ENCODE measurements at regions of chr2 and their contacts with region 1.

Region 1: GRCh38 chr2:146982393-146982846 is 862.4 kb upstream of the ACVR2A start:
- DNase-seq: peak; percentile 83
- H3K4me3 ChIP-seq: no peak overlapping the region
- CTCF ChIP-seq: no peak

Region 2: GRCh38 chr2:146820672-146821071 is 161.7 kb before region 1 on chr2:
- in situ Hi-C with region 1: no loop called
- DNase-seq: peak; percentile 76
- H3K4me3 ChIP-seq: no peak overlapping the region
- CTCF ChIP-seq: no peak

Region 3: GRCh38 chr2:147030966-147031720 is 48.7 kb after region 1 on chr2:
- in situ Hi-C with region 1: loop called (anchors 10 kb)
- DNase-seq: peak; percentile 92
- H3K4me3 ChIP-seq: no peak overlapping the region
- CTCF ChIP-seq: no peak

Region 4: GRCh38 chr2:147135376-147135775 is 153.0 kb after region 1 on chr2:
- in situ Hi-C with region 1: no loop called
- DNase-seq: no peak
- H3K4me3 ChIP-seq: no peak overlapping the region
- CTCF ChIP-seq: no peak